CD8-positive, alpha-beta T cell (primary cell): ENCODE measurements at regions of chr1 and their contacts with region 1.

Region 1: GRCh38 chr1:181088079-181089016 is at the start of gene IER5:
- DNase-seq: peak; percentile 93 to 97 (median 95)
- ATAC-seq: peak; percentile 71
- H3K4me3 ChIP-seq: peak within 1 kb of the TSS; percentile 70 to 97
- H3K4me3 Mint-ChIP-seq: peak within 1 kb of the TSS; percentile 99
- H3K27ac ChIP-seq: peak within 1 kb of the TSS; percentile 89 to 99
- H3K27ac Mint-ChIP-seq: peak within 1 kb of the TSS; percentile 99
- H3K4me1 ChIP-seq: peaks cover 20% of the 10 kb centered on the region
- H3K4me1 Mint-ChIP-seq: peaks cover 44% of the 10 kb centered on the region
- H3K27me3 ChIP-seq: no peaks in the 10 kb centered on the region
- H3K27me3 Mint-ChIP-seq: no peaks in the 10 kb centered on the region
- CTCF ChIP-seq: no peak
- total RNA-seq, gene IER5: 74.7 to 76.6 TPM

Region 2: DNA sequence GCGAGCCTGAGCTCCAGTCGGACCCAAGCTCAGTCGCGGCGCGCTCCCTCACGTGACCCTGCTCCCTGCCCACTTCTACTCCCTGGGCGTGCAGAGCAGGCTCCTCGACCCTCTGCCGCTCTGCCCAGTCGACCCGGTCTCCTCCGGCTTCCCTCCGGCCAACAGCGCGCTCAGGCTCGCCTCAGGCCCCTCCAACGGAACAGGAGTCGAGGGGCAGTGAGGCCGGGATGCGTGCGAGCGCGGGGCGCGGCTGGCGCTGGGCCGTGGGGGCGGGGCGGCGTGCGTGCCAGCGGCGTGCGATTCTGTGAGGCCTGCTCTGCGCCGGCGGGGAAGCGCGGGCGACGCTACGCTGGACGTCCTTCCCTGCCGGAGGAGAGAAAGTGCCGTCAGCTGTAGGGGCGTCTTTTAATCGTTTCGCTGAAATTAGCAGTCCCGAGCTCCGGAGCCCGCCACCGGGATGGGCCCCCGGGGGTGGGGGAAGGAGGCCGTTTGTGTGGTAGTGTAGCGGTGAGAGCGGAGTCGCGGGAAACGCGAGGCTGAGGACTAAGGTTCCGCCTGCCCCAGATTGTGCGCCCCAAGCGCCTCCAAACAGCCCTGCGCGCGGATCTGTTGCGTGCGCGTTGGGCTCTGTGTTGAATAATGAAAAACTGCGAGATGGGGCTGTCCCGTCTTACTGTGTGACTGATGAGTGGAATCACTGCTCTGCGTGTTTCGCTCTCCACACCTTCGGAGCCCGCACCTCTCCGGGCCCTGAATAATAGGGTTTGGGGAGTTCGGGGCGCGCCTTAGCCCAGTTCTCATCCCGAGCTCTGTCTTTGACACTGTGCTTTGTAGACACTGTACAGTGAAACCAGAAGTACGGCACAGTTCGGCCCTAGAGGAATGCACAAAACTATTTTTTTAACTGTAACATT is 585.7 kb before region 1 on chr1 and contains the start of gene ACBD6:
- CTCF ChIA-PET with region 1: no interaction called
- POLR2A ChIA-PET with region 1: no interaction called
- intact Hi-C with region 1: loop called (anchors 2 to 5 kb)
- DNase-seq: peak; percentile 73 to 92 (median 84)
- ATAC-seq: peak; percentile 89
- H3K4me3 ChIP-seq: peak within 1 kb of the TSS; percentile 96 to 97
- H3K4me3 Mint-ChIP-seq: peak within 1 kb of the TSS; percentile 96
- H3K27ac ChIP-seq: peak within 1 kb of the TSS; percentile 75 to 76
- H3K27ac Mint-ChIP-seq: peak within 1 kb of the TSS; percentile 98
- H3K4me1 ChIP-seq: peaks cover 27% of the 10 kb centered on the region
- H3K4me1 Mint-ChIP-seq: peaks cover 47% of the 10 kb centered on the region
- H3K27me3 ChIP-seq: no peaks in the 10 kb centered on the region
- H3K27me3 Mint-ChIP-seq: no peaks in the 10 kb centered on the region
- CTCF ChIP-seq: no peak
- total RNA-seq, gene ACBD6: 23.4 to 24.6 TPM

Region 3: DNA sequence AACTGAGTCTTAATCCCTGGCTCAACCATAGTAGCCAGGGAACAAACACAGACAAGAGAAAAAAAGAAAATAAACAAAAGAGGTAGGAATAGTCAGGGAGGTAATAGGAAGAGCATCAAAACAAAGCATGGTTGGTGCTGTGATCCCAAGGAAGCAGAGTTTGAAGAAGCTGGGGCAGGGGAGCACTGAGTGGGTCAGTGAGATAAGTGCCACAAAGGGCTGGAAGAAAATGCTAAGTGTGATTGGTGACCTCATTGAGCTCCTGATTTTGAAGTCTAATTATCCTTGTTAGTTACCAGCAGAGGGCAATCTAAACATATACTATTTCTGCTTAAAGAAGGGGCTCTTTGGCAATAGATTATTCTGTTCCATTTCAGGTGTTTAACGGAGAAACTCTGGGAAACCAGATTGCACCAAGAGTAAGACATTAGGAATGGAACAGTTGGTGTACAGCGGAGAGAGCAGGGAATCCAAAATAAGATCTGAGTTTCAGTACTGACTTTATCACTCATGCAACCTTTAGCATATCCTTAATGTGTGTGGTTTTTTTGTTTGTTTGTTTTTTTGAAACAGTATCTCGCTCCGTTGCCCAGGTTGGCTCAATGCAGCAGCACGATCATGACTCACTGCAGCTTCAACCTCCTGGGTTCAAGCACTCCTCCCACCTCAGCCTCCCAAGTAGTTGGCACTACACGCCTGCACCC is 206.4 kb before region 1 on chr1:
- CTCF ChIA-PET with region 1: no interaction called
- POLR2A ChIA-PET with region 1: no interaction called
- intact Hi-C with region 1: loop called in 1 of 2 experiments (anchors 5 kb)
- DNase-seq: peak in 2 of 9 experiments; percentile 5 to 28
- ATAC-seq: no peak
- H3K4me3 ChIP-seq: no peak overlapping the region
- H3K4me3 Mint-ChIP-seq: no peak overlapping the region
- H3K27ac ChIP-seq: no peak overlapping the region
- H3K27ac Mint-ChIP-seq: no peak overlapping the region
- H3K4me1 ChIP-seq: no peaks in the 10 kb centered on the region
- H3K4me1 Mint-ChIP-seq: no peaks in the 10 kb centered on the region
- H3K27me3 ChIP-seq: no peaks in the 10 kb centered on the region
- H3K27me3 Mint-ChIP-seq: no peaks in the 10 kb centered on the region
- CTCF ChIP-seq: no peak

Region 4: DNA sequence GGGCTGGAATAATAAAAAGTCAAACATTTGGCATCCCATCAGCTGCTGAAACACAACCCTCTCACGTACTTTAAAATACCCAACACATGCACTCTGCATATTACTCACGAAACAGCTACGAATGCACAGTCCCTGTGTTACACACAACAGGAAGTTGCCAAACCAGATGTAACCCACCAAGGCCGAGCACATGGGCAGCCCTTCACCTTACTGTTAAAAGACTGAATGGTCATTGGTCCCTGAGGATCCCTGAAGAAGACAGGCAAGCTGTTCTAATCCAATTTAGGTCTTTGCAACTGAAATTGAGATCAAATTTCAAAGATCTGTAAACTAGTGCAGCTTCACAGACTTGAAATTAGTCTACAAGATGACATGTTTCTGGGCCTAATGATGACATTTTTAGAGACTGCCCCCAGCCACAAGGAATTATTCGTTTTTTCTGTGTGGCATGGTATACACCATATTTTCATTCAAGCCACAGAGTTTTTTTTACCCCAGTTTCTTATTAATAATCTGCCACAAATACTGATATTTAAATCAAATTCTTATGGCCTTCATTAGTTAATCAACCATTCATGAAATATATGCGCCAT is 25.4 kb before region 1 on chr1:
- CTCF ChIA-PET with region 1: interaction called, 10 read pairs
- POLR2A ChIA-PET with region 1: interaction called, 11 read pairs
- intact Hi-C with region 1: no loop called
- DNase-seq: peak in 7 of 9 experiments; percentile 20 to 71 (median 29)
- ATAC-seq: peak; percentile 76
- H3K4me3 ChIP-seq: peak overlapping the region; percentile 40
- H3K4me3 Mint-ChIP-seq: peak overlapping the region; percentile 70
- H3K27ac ChIP-seq: peak overlapping the region; percentile 7 to 84
- H3K27ac Mint-ChIP-seq: peak overlapping the region; percentile 82
- H3K4me1 ChIP-seq: peaks cover 17% of the 10 kb centered on the region
- H3K4me1 Mint-ChIP-seq: peaks cover 24% of the 10 kb centered on the region
- H3K27me3 ChIP-seq: no peaks in the 10 kb centered on the region
- H3K27me3 Mint-ChIP-seq: no peaks in the 10 kb centered on the region
- CTCF ChIP-seq: no peak

Region 5: DNA sequence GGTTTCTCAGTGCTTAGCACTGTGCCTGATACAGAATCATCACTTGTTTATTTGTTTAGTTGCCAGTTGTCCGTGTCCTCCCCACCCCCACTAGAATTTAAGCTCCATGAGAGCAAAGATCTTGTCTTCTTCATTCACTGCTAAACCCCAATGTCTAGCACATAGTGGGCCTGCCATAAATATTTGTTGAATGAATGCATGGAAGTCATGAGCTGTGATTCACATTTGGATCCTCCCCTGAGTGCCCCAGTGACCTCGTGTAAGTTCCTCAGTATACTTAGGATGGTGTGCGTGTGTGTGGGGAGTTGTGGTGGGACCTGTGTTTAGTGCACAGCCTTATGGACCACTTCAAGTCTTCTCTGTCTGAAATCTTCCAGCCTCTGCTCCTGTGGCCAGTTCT is 23.2 kb after region 1 on chr1:
- CTCF ChIA-PET with region 1: interaction called, 57 read pairs
- POLR2A ChIA-PET with region 1: interaction called, 143 read pairs
- intact Hi-C with region 1: no loop called
- DNase-seq: no peak
- ATAC-seq: no peak
- H3K4me3 ChIP-seq: no peak overlapping the region
- H3K4me3 Mint-ChIP-seq: no peak overlapping the region
- H3K27ac ChIP-seq: no peak overlapping the region
- H3K27ac Mint-ChIP-seq: no peak overlapping the region
- H3K4me1 ChIP-seq: peaks cover 2% of the 10 kb centered on the region
- H3K4me1 Mint-ChIP-seq: peaks cover 8% of the 10 kb centered on the region
- H3K27me3 ChIP-seq: no peaks in the 10 kb centered on the region
- H3K27me3 Mint-ChIP-seq: peaks cover 3% of the 10 kb centered on the region
- CTCF ChIP-seq: no peak

Region 6: GRCh38 chr1:181166377-181167196 is 78.2 kb after region 1 on chr1:
- CTCF ChIA-PET with region 1: interaction called, 15 read pairs
- POLR2A ChIA-PET with region 1: interaction called, 5 read pairs
- intact Hi-C with region 1: loop called (anchors 1 kb)
- DNase-seq: peak; percentile 51 to 87 (median 75)
- ATAC-seq: peak; percentile 99
- H3K4me3 ChIP-seq: peak overlapping the region; percentile 6 to 28
- H3K4me3 Mint-ChIP-seq: peak overlapping the region; percentile 73
- H3K27ac ChIP-seq: no peak overlapping the region
- H3K27ac Mint-ChIP-seq: no peak overlapping the region
- H3K4me1 ChIP-seq: peaks cover 5% of the 10 kb centered on the region
- H3K4me1 Mint-ChIP-seq: peaks cover 7% of the 10 kb centered on the region
- H3K27me3 ChIP-seq: no peaks in the 10 kb centered on the region
- H3K27me3 Mint-ChIP-seq: no peaks in the 10 kb centered on the region
- CTCF ChIP-seq: peak; percentile 93

Region 7: DNA sequence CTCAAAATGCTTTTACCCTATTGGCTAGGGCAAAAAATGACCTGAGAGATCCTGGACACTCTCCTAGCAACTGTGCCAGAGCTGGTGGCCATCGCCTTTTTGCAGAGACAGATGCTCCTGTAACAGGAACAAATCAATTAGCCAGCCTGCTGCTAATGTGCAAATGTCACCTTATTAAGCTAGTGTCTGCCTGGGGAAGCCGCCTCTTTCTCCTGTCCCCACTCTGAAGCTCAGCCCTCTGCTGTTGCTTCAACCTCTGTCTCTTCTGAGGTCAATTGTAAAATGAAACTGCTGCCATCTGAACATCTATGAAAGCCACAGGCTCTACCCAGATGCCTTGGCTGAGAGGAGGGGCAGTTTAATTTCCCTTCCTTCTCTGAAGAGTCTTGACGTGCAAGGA is 309.5 kb after region 1 on chr1:
- CTCF ChIA-PET with region 1: no interaction called
- POLR2A ChIA-PET with region 1: no interaction called
- intact Hi-C with region 1: no loop called
- DNase-seq: peak in 6 of 9 experiments; percentile 11 to 67 (median 40)
- ATAC-seq: peak; percentile 19
- H3K4me3 ChIP-seq: peak overlapping the region in 1 of 2 experiments; percentile 14
- H3K4me3 Mint-ChIP-seq: peak overlapping the region; percentile 63
- H3K27ac ChIP-seq: peak overlapping the region; percentile 36 to 52
- H3K27ac Mint-ChIP-seq: no peak overlapping the region
- H3K4me1 ChIP-seq: peaks cover 83% of the 10 kb centered on the region
- H3K4me1 Mint-ChIP-seq: peaks cover 38% of the 10 kb centered on the region
- H3K27me3 ChIP-seq: no peaks in the 10 kb centered on the region
- H3K27me3 Mint-ChIP-seq: no peaks in the 10 kb centered on the region
- CTCF ChIP-seq: no peak